Prostate gland (tissue), 2 donors: ENCODE measurements at regions of chr6 and their contacts with region 1.

Region 1: DNA sequence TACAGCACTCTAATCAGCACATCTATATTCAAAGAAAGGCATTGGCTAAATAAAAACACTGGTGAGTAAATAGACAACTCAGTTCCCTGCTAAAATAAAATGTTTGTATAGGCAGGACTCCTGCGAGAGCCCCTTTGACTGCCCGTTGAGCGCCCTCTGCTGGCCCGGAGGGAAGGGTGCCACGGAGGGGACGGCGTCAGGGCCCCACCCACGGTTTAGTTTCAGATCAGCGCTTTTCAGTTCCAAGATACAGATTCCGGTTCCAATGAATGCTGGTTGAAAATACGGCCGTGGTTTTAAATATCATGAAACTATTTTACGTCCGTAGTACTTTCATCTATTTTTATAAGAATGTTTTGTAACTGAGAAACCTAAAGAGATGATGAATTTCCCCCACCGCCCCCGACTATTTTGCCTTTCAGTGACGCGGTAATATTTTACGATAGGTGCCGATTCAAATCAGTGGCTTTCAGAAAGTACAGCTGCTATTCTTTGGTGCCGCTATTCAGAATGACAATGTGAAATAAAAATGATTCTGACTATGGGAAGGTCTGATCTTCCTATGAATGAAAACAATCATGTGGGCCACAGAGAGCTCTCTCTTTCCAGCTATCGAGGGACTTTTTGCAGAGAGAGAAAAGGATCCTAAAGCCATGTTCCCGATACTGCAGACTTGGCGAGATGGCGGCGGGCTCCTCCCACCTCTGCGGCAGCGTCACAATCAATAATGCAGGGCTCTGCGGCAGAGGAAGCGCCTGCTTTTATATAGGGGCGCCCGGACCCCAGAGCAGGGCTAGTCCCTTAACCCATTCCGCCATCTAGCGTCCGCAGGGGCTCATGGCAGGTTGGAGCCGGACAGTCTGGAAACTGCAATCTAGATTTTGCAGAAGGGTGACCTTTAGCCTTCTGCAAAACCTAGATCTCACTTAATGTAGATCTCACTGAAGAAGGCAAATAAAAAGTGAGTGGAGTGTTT is 10.6 kb upstream of the CCN6 start:
- DNase-seq: peak; percentile 73
- H3K4me3 ChIP-seq: peak overlapping the region; percentile 40 to 46
- H3K27ac ChIP-seq: peak overlapping the region; percentile 73 to 75
- H3K4me1 ChIP-seq: no peaks in the 10 kb centered on the region
- H3K27me3 ChIP-seq: no peaks in the 10 kb centered on the region
- CTCF ChIP-seq: peak; percentile 78 to 94 (median 85)
- POLR2A ChIP-seq: no peak

Region 2: GRCh38 chr6:111468329-111469012 is 574.8 kb before region 1 on chr6:
- intact Hi-C with region 1: no loop called
- DNase-seq: no peak
- H3K4me3 ChIP-seq: no peak overlapping the region
- H3K27ac ChIP-seq: no peak overlapping the region
- H3K4me1 ChIP-seq: no peaks in the 10 kb centered on the region
- H3K27me3 ChIP-seq: no peaks in the 10 kb centered on the region
- CTCF ChIP-seq: no peak
- POLR2A ChIP-seq: no peak

Region 3: DNA sequence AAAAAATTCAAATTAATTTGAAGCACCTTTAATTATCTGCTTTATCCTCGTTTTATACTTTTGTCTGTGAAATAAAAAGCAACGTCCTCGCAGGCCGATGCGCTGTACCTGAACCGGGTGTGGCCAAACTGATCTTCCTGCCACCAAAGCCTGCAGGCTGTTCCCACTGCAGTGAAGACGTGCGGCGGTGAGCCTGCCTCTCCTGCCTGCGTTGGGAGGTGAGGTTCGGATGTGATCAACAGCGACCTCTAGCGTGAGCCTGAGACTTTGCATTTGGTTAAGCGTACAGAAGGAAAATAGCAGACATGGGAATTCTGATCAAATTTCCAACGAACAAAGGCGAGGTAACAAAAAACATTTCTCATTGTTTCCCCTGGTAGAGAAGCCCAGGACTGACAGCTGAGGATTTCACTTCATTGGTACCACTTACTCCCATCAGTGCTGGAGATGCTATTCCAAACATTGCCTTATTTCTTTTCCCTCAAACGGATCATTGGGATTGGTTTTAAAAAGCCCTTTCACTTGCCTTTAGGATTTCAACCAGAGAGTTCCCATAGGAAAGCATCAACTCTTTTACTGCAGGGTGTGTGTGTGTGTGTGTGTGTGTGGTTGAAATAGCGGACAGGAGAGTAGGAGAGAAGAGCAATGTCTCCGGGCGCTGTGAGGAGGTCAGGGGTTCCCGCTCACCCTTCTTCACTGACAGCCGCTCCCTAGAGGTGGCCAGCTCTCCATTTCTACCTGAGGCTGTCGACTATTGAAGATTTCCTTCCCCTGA is 46.1 kb before region 1 on chr6:
- intact Hi-C with region 1: loop called (anchors 5 kb)
- DNase-seq: peak; percentile 75
- H3K4me3 ChIP-seq: no peak overlapping the region
- H3K27ac ChIP-seq: no peak overlapping the region
- H3K4me1 ChIP-seq: no peaks in the 10 kb centered on the region
- H3K27me3 ChIP-seq: no peaks in the 10 kb centered on the region
- CTCF ChIP-seq: peak; percentile 85 to 93 (median 92)
- POLR2A ChIP-seq: no peak